Stomach (tissue), 19 donors: ENCODE measurements at regions of chr19 and their contacts with region 1.

Region 1: GRCh38 chr19:35931161-35931873 is 4.9 kb upstream of the LRFN3 start:
- DNase-seq: peak; percentile 99 to 100
- H3K4me3 ChIP-seq: peak overlapping the region in 3 of 4 donors; percentile 18 to 24 (median 23)
- H3K27ac ChIP-seq: peak overlapping the region; percentile 63 to 82 (median 75)
- H3K4me1 ChIP-seq: peaks cover 16 to 30% (median 23%) of the 10 kb centered on the region in 4 donors
- H3K27me3 ChIP-seq: peaks cover 0 to 6% (median 0%) of the 10 kb centered on the region in 3 donors
- CTCF ChIP-seq: peak in 5 of 7 experiments; percentile 78 to 99 (median 89)
- EP300 ChIP-seq: no peak
- POLR2A ChIP-seq: peak in 2 of 4 donors; percentile 49 to 60

Region 2: DNA sequence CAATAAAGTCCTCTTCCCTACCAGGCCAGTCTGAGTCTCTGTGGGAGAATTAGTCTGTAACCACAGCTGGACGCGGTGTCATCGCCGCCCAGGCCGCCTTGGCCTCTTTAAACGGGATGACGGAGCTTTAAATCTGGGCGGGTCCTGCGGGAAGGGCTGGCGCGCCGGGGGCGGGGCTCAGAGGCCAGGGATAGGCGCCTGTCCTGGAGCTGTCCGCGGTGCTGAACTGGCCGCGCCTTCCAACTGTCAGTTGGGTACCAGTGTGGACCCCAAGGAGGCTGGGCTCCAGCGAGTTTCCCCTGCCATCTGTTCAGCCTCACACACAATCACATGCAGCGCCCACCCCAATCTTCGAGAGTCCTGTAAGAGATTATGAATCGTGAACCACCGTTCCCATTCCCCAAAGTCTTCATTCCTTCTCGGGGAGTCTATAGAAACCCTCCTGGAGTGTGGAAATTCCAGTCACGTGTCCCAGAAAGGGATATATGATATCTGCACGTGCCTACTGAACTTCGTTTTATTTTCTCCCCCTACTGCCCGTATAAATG is 51.5 kb before region 1 on chr19:
- intact Hi-C with region 1: loop called (anchors 5 kb)
- DNase-seq: peak; percentile 89 to 95
- H3K4me3 ChIP-seq: no peak overlapping the region
- H3K27ac ChIP-seq: no peak overlapping the region
- H3K4me1 ChIP-seq: peaks cover 0 to 10% (median 2%) of the 10 kb centered on the region in 4 donors
- H3K27me3 ChIP-seq: peaks cover 0 to 24% (median 0%) of the 10 kb centered on the region in 3 donors
- CTCF ChIP-seq: no peak
- EP300 ChIP-seq: no peak
- POLR2A ChIP-seq: no peak

Region 3: DNA sequence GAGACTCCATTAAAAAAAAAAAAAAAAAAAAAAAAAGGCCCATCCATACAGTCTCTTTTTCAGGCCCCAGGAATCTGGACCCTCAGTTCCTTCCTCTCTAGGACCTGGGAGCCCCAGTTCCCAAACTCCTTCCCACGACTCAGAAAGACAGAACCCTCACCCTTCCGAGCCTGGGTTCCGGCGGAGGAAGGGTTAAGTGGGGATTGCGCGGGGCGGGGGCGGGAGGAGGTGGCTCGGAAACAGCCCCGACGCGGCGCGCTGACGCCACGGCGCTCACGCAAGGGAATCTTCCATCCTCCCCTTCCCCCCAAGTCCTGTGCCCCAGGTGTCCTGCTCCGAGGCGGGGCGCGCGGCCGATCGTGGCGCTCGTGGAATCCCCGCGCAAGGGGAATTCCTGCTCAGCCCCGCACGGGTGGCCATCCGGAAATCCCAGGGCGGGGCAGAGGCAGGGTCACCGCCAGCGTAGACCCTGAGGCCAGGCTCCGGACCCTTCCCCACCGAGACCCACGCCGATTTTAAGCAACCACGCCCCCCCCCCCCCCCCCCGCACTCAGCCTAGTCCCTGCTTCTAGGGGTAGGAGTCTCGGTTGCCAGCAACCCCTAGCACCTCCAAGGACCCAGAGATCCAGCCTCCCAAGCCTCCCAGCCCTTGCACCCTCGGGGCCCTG is 31.6 kb before region 1 on chr19:
- intact Hi-C with region 1: loop called (anchors 5 kb)
- DNase-seq: peak; percentile 85 to 95
- H3K4me3 ChIP-seq: peak overlapping the region; percentile 72 to 95 (median 74)
- H3K27ac ChIP-seq: peak overlapping the region; percentile 84 to 95 (median 93)
- H3K4me1 ChIP-seq: peaks cover 25 to 69% (median 37%) of the 10 kb centered on the region in 4 donors
- H3K27me3 ChIP-seq: no peaks in the 10 kb centered on the region
- CTCF ChIP-seq: no peak
- EP300 ChIP-seq: no peak
- POLR2A ChIP-seq: no peak